Activated CD4-positive, alpha-beta T cell treated with anti-CD3 and anti-CD28 coated beads for 36 hours (primary cell): ENCODE measurements at regions of chr14 and their contacts with region 1.

Region 1: GRCh38 chr14:73633116-73634010 is 11.4 kb upstream of the DNAL1 start:
- DNase-seq: peak; percentile 74
- ATAC-seq: peak; percentile 82
- H3K4me3 Mint-ChIP-seq: peak overlapping the region; percentile 49
- H3K27ac Mint-ChIP-seq: peak overlapping the region; percentile 37
- H3K4me1 Mint-ChIP-seq: peaks cover 5% of the 10 kb centered on the region
- H3K27me3 Mint-ChIP-seq: peaks cover 12% of the 10 kb centered on the region

Region 2: GRCh38 chr14:73173092-73173735 is 460.1 kb before region 1 on chr14:
- CTCF ChIA-PET with region 1: interaction called, 3 read pairs
- POLR2A ChIA-PET with region 1: no interaction called
- intact Hi-C with region 1: loop called in 1 of 2 experiments (anchors 5 kb)
- DNase-seq: peak; percentile 7
- ATAC-seq: no peak
- H3K4me3 Mint-ChIP-seq: no peak overlapping the region
- H3K27ac Mint-ChIP-seq: no peak overlapping the region
- H3K4me1 Mint-ChIP-seq: no peaks in the 10 kb centered on the region
- H3K27me3 Mint-ChIP-seq: no peaks in the 10 kb centered on the region

Region 3: DNA sequence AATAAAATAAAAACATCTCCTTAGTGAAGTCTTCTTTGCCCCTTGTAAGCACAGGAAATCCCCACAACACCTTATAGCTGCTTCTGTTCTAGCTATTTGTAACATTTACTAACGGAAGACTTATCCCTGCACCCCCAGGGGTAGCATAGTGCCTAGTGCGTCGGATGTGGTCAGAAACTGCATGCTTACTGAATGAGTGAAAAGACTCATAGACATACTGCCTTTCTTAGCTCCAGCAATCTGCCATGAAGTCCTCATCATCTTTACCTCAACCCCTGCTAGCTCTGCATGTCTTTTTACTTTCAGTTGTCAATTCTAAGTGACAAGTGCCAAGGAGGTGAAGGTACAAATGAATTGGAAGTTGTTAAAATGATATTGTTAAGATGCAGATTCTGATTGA is 129.7 kb before region 1 on chr14:
- CTCF ChIA-PET with region 1: interaction called, 40 read pairs
- POLR2A ChIA-PET with region 1: no interaction called
- intact Hi-C with region 1: loop called (anchors 1 kb)
- DNase-seq: no peak
- ATAC-seq: no peak
- H3K4me3 Mint-ChIP-seq: no peak overlapping the region
- H3K27ac Mint-ChIP-seq: no peak overlapping the region
- H3K4me1 Mint-ChIP-seq: no peaks in the 10 kb centered on the region
- H3K27me3 Mint-ChIP-seq: no peaks in the 10 kb centered on the region

Region 4: DNA sequence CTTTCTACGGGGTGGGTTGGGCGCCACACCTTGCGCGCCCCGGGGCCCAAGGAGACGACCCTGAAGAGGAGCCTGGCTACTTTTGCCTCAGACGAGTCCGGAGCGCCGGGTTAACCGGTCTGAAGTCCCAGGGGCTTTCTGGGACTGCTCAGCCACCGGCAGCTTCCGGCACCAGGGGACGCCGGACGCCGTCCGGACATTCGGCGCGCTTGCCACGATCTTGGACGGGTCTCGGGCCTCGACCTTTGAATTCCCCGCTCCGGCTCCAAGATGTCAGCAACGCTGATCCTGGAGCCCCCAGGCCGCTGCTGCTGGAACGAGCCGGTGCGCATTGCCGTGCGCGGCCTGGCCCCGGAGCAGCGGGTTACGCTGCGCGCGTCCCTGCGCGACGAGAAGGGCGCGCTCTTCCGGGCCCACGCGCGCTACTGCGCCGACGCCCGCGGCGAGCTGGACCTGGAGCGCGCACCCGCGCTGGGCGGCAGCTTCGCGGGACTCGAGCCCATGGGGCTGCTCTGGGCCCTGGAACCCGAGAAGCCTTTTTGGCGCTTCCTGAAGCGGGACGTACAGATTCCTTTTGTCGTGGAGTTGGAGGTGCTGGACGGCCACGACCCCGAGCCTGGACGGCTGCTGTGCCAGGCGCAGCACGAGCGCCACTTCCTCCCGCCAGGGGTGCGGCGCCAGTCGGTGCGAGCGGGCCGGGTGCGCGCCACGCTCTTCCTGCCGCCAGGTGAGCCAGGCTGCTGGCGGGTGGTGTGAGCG is 41.5 kb before region 1 on chr14 and contains the start of gene ACOT4:
- CTCF ChIA-PET with region 1: interaction called, 8 read pairs
- POLR2A ChIA-PET with region 1: no interaction called
- intact Hi-C with region 1: loop called in 1 of 2 experiments (anchors 1 kb)
- DNase-seq: peak; percentile 69
- ATAC-seq: peak; percentile 85
- H3K4me3 Mint-ChIP-seq: peak within 1 kb of the TSS; percentile 65
- H3K27ac Mint-ChIP-seq: peak within 1 kb of the TSS; percentile 56
- H3K4me1 Mint-ChIP-seq: peaks cover 9% of the 10 kb centered on the region
- H3K27me3 Mint-ChIP-seq: no peaks in the 10 kb centered on the region
- total RNA-seq, gene ACOT4: 3.0 to 3.1 TPM

Region 5: GRCh38 chr14:73865536-73866113 is 232.3 kb after region 1 on chr14:
- CTCF ChIA-PET with region 1: no interaction called
- POLR2A ChIA-PET with region 1: no interaction called
- intact Hi-C with region 1: loop called in 1 of 2 experiments (anchors 5 kb)
- DNase-seq: no peak
- ATAC-seq: no peak
- H3K4me3 Mint-ChIP-seq: no peak overlapping the region
- H3K27ac Mint-ChIP-seq: no peak overlapping the region
- H3K4me1 Mint-ChIP-seq: no peaks in the 10 kb centered on the region
- H3K27me3 Mint-ChIP-seq: no peaks in the 10 kb centered on the region

Region 6: GRCh38 chr14:74249433-74250375 is 616.3 kb after region 1 on chr14:
- CTCF ChIA-PET with region 1: no interaction called
- POLR2A ChIA-PET with region 1: no interaction called
- intact Hi-C with region 1: no loop called
- DNase-seq: no peak
- ATAC-seq: no peak
- H3K4me3 Mint-ChIP-seq: no peak overlapping the region
- H3K27ac Mint-ChIP-seq: no peak overlapping the region
- H3K4me1 Mint-ChIP-seq: peaks cover 7% of the 10 kb centered on the region
- H3K27me3 Mint-ChIP-seq: peaks cover 36% of the 10 kb centered on the region